Left colon (tissue), 2 donors: ENCODE measurements at regions of chr2 and their contacts with region 1.

Region 1: DNA sequence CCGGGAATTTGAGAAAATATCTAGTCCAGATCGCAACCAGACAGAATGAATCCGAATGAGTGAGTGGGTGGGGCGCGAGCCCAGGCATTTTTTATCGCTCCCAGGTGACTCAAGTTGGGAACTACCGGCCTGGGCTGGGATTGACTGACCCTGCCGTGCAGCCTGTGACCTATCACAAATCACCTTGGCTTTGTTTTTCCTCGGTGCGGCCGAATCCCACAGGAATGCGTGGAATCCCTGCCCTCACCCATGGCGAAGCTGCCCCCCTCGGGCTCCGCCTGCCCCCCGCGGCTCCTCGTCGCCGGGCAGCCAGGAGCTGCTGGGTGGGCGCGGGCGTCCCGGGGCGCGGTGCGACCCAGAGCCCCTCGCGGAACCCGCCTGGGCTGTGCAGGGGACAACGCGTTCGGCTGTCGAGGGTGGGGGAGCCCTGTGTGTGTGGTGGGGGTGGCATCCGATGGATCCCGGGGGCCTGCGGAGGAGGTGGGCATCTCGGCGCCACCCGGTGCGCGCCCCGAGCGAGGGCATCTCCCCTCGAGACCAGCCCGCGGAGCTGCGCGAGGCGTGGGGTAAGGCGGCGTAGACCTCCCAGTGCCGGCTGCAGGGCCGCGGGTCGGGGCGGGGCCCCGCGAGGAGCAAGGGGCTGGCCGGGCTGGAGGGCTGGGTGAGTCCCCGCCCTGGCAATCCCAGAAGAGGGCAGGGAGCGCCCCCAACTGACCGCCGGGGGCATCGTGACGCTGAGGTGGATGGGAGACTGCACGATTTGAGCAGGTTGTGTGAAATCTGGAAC is 16.5 kb downstream of the B3GNT7 start:
- DNase-seq: peak; percentile 90 to 92
- ATAC-seq: peak; percentile 72

Region 2: DNA sequence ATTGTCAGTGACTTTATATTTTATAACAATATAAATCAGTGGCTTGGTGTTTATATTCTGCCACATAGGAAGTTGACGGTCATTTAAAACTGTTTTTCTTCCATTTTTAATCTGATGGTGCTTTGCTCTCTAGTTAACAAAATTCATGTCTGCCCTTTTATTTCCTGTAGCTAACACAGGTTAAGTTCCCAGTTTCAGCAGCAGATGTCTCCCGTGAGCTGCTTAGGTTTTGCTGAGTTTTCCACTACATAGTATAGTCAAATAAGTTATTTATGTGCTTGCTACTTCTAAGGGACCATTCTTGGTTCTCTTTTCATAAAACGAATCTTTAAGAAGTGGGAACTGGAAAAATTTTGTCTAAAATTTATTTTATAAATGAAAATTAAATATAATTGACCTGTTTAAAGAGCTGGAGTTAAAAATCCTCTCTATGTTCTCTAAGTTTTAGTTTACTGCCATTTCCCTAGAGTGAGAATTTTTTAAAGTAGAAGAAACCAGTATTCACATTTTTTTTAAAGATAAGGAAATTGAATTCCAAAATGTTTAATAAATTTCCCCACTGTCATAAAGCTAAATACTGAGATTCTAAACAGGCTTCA is 307.8 kb before region 1 on chr2:
- intact Hi-C with region 1: loop called in 1 of 2 experiments (anchors 5 kb)
- DNase-seq: peak in 1 of 2 donors; percentile 71
- ATAC-seq: peak; percentile 61

Region 3: DNA sequence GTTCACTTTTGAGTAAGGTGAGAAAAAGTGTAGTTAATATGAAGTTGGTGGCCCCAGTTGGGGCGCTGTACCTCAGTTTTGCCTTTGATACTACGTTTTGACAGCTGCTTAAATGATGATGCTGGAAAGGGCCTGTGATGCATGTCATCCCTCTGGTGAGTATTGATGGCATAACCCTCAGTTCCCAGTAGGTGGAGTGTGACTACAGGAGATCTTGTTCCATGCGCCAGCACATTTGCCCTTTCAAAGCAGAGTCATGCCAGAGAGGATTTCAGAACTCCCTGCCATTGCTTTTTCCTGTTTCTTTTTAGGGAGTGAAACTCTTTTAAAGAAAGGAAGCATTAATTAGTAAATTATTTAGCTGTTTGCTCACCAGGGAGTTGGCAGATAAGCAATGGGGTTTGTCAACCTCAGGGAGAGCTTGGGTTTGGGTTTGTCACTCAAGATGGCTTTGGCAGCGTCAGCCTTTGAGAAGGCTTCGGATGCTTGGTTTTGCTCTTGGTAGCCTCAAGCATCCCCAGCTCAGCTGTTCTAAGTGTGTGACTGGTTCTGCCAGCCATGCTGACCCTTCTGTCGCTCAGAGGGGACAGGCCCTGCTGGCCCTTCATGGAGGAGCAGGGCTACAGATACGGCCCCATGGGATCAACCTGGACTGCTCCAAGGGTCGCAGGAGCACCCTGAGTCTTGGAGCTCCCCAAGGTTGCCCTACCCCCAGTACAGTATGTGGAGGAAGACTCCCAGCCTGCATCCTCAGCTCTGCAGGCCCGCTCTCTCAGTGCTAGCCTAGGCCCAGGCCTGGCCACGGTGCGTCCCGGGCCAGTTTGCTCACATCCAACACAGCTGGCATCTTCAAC is 184.5 kb before region 1 on chr2:
- intact Hi-C with region 1: loop called in 1 of 2 experiments (anchors 5 kb)
- DNase-seq: peak; percentile 45 to 72
- ATAC-seq: peak; percentile 95